HEK293 (cell line): ENCODE measurements at regions of chr6 and their contacts with region 1.

Region 1: GRCh38 chr6:36724514-36725390 is 27.1 kb downstream of the RAB44 start:
- H3K4me3 ChIP-seq: no peak overlapping the region
- H3K27ac ChIP-seq: no peak overlapping the region
- H3K4me1 ChIP-seq: no peaks in the 10 kb centered on the region
- CTCF ChIP-seq: peak; percentile 77

Region 2: GRCh38 chr6:36605560-36606391 is 119.0 kb before region 1 on chr6:
- CTCF ChIA-PET with region 1: interaction called, 17 read pairs
- POLR2A ChIA-PET with region 1: no interaction called
- H3K4me3 ChIP-seq: no peak overlapping the region
- H3K27ac ChIP-seq: no peak overlapping the region
- H3K4me1 ChIP-seq: no peaks in the 10 kb centered on the region
- CTCF ChIP-seq: no peak

Region 3: DNA sequence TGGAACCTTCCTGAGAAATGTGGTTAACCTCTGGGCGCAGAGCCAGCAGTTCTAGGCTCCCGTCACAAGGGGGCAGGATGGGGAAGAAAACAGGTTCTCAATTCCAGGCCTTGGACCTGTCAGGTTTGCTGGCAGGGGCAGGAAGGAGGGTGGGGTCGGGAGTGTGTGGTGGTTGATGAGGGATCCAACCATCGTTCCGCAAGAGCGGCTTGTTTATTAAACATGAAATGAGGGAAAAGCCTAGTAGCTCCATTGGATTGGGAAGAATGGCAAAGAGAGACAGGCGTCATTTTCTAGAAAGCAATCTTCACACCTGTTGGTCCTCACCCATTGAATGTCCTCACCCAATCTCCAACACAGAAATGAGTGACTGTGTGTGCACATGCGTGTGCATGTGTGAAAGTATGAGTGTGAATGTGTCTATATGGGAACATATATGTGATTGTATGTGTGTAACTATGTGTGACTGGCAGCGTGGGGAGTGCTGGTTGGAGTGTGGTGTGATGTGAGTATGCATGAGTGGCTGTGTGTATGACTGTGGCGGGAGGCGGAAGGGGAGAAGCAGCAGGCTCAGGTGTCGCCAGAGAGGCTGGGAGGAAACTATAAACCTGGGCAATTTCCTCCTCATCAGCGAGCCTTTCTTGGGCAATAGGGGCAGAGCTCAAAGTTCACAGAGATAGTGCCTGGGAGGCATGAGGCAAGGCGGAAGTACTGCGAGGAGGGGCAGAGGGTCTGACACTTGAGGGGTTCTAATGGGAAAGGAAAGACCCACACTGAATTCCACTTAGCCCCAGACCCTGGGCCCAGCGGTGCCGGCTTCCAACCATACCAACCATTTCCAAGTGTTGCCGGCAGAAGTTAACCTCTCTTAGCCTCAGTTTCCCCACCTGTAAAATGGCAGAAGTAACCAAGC is 100.9 kb before region 1 on chr6:
- CTCF ChIA-PET with region 1: interaction called, 50 read pairs
- POLR2A ChIA-PET with region 1: no interaction called
- H3K4me3 ChIP-seq: no peak overlapping the region
- H3K27ac ChIP-seq: no peak overlapping the region
- H3K4me1 ChIP-seq: no peaks in the 10 kb centered on the region; the same call in 1 of the 2 replicates
- CTCF ChIP-seq: peak; percentile 92

Region 4: GRCh38 chr6:36692861-36693718 is 31.7 kb before region 1 on chr6:
- CTCF ChIA-PET with region 1: no interaction called
- POLR2A ChIA-PET with region 1: no interaction called
- H3K4me3 ChIP-seq: no peak overlapping the region
- H3K27ac ChIP-seq: no peak overlapping the region
- H3K4me1 ChIP-seq: no peaks in the 10 kb centered on the region
- CTCF ChIP-seq: no peak

Region 5: DNA sequence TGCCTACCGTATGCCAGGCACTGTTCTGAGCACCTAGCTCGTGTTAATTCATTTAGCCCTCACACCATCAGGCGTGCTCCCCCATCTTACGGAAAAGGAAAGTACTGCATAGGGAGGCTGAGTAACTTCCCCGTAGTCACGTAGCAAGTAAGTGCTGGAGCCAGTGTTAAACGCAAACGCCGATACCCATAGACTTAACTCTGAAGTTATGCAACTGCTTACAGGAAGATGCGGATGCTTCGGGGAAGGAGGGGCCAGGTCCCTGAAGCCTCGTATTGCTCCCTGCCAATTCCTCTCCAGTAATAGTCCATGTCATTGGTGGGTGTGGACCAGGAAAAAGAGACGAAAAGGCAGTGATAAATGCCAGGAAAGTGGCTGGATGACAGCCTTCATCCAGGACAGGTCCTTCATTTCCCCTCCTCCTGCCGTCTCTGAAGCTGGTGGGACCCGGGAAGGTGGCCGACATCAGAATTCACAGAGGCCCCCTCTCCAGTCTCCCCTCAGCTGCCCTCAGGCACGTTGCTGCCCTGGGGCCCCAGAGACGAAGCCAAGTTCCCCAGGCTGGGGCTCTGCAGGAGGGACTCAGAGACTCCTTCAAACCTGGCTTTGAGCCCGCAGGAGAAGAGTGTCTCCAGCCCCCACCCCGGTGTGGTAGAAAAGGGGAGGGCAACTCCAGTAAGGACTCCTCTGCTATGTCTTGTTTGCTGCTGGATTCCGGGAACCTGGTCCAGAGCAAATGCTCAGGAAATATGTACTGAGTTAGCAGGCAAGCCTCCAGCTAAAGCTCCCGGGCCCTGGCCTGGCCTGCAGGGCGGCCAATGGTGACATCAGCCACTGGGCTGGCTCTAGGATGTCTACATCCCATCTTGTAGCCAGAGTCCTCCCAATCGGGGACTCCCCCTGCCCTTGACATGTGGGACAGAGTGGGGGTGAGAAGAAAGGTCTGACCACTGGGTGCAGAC is 10.6 kb after region 1 on chr6:
- CTCF ChIA-PET with region 1: interaction called, 19 read pairs
- POLR2A ChIA-PET with region 1: no interaction called
- H3K4me3 ChIP-seq: no peak overlapping the region
- H3K27ac ChIP-seq: no peak overlapping the region
- H3K4me1 ChIP-seq: no peaks in the 10 kb centered on the region
- CTCF ChIP-seq: no peak